PC-3 (cell line): ENCODE measurements at regions of chr17 and their contacts with region 1.

Region 1: DNA sequence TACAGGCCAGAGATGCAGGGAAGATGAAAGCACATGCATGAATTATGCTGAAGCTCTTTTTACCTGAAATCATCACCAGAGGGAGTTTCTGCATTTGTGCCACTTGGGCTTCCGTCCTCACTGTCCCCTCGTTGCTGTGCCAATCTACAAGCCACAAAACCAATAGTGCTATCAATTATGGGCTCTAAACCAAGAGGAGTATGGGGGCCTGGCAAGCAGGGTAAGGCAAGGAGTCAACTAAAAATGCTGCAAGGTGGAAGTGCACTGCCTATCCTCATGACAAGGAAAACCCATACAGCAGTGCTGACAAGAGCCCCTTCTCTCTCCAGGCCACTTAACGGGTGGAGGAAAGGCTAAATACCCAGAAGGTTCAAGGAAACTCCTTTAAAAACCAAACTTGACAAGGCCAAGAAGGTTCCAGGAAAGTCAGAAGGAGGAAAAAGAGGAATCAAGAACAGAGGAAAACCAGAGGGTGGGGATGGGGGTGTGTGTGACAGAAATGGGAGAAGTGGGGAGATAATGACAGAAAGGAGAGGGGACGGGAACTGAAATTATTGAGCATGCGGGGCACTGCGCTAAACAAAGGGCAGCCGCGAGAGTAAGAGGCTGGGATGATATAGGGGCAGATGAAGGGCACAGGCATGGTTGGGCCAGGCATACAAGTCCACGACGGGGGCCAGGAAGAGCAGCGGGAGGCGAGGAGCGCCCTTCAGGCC is 674 bp downstream of the C17orf75 start:
- DNase-seq: peak; percentile 26
- ATAC-seq: peak; percentile 12; the same call in 1 of the 2 replicates
- H3K4me3 ChIP-seq: peak overlapping the region; percentile 88
- H3K27ac ChIP-seq: peak overlapping the region; percentile 19; the same call in 1 of the 2 replicates
- H3K4me1 ChIP-seq: peaks cover 11% of the 10 kb centered on the region; the same call in 1 of the 2 replicates
- H3K27me3 ChIP-seq: no peaks in the 10 kb centered on the region
- CTCF ChIP-seq: peak; percentile 19; the same call in 1 of the 2 replicates

Region 2: GRCh38 chr17:32302860-32303649 is 38.2 kb before region 1 on chr17:
- CTCF ChIA-PET with region 1: interaction called, 10 read pairs
- POLR2A ChIA-PET with region 1: no interaction called
- intact Hi-C with region 1: no loop called
- DNase-seq: no peak
- ATAC-seq: no peak
- H3K4me3 ChIP-seq: no peak overlapping the region
- H3K27ac ChIP-seq: no peak overlapping the region
- H3K4me1 ChIP-seq: no peaks in the 10 kb centered on the region
- H3K27me3 ChIP-seq: no peaks in the 10 kb centered on the region
- CTCF ChIP-seq: no peak

Region 3: GRCh38 chr17:32355649-32356377 is 14.5 kb after region 1 on chr17:
- CTCF ChIA-PET with region 1: no interaction called
- POLR2A ChIA-PET with region 1: no interaction called
- intact Hi-C with region 1: no loop called
- DNase-seq: no peak
- ATAC-seq: no peak
- H3K4me3 ChIP-seq: no peak overlapping the region
- H3K27ac ChIP-seq: no peak overlapping the region
- H3K4me1 ChIP-seq: peaks cover 12% of the 10 kb centered on the region; the same call in 1 of the 2 replicates
- H3K27me3 ChIP-seq: no peaks in the 10 kb centered on the region
- CTCF ChIP-seq: no peak

Region 4: GRCh38 chr17:32558997-32559650 is 217.8 kb after region 1 on chr17:
- CTCF ChIA-PET with region 1: no interaction called
- POLR2A ChIA-PET with region 1: no interaction called
- intact Hi-C with region 1: no loop called
- DNase-seq: no peak
- ATAC-seq: no peak
- H3K4me3 ChIP-seq: no peak overlapping the region
- H3K27ac ChIP-seq: no peak overlapping the region
- H3K4me1 ChIP-seq: peaks cover 3% of the 10 kb centered on the region
- H3K27me3 ChIP-seq: no peaks in the 10 kb centered on the region
- CTCF ChIP-seq: no peak